Activated T-helper 1 cell treated with anti-CD3 and anti-CD28 coated beads, Interleukin-12 subunit alpha, Interleukin-12 subunit beta, Interleukin-2, Interleukin-4 antibody, amounts not matched to agents 30 ng/mL and 10 ng/mL and 1 ng/mL, durations not matched to agents 14 hours and 24 hours and 36 hours (primary cell): ENCODE measurements at regions of chr14 and their contacts with region 1.

Region 1: DNA sequence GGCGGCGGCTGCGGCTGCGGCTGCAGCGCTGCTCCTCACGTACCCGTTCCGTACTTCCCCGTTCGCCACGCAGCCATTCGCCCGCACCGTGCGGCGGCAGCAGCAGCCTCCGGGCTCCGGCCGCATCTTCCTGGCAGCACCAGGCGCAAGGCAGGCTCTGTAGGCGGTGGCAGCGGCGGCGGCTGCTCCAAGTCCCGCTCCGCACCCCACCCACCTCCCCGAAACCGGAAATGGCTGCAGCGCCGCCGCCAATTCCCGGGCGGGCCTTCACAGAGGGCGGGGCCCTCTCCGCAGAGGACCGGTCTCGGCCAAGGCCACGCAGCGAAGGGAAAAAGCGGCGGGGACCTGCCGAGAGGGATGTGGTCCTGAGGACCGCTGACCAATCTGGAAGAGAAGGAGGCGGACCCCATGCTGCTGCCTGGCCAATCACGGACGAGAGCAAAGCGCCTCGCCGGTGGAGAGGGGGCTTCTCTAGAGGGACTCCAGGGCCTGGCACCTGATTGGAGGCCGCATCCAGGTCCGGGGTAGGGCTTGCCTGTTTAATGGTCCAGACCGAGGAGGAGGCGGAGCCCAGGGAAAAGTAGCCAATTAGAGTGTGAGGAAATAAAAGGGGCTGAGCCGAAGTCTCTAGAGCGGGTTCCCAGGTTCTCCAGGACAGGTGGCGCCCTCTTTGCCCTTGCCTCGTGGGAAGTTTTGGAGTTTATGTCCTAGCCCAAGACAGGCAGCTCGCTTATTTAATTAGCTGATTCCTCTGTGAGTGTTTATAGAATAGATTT is at the start of gene SPTLC2:
- DNase-seq: peak; percentile 95
- H3K4me3 Mint-ChIP-seq: peak within 1 kb of the TSS; percentile 95
- H3K27ac Mint-ChIP-seq: peak within 1 kb of the TSS; percentile 96
- H3K4me1 Mint-ChIP-seq: peaks cover 46% of the 10 kb centered on the region
- H3K27me3 Mint-ChIP-seq: peaks cover 2% of the 10 kb centered on the region
- total RNA-seq, gene SPTLC2: 29.9 and 31.9 TPM in 2 replicates

Region 2: GRCh38 chr14:77554207-77554606 is 62.4 kb before region 1 on chr14:
- intact Hi-C with region 1: loop called (anchors 5 kb)
- DNase-seq: no peak
- H3K4me3 Mint-ChIP-seq: peak overlapping the region; percentile 45
- H3K27ac Mint-ChIP-seq: peak overlapping the region; percentile 47
- H3K4me1 Mint-ChIP-seq: peaks cover 17% of the 10 kb centered on the region
- H3K27me3 Mint-ChIP-seq: no peaks in the 10 kb centered on the region

Region 3: GRCh38 chr14:77580964-77581505 is 35.6 kb before region 1 on chr14:
- intact Hi-C with region 1: loop called (anchors 2 kb)
- DNase-seq: no peak
- H3K4me3 Mint-ChIP-seq: peak overlapping the region; percentile 52
- H3K27ac Mint-ChIP-seq: no peak overlapping the region
- H3K4me1 Mint-ChIP-seq: peaks cover 24% of the 10 kb centered on the region
- H3K27me3 Mint-ChIP-seq: no peaks in the 10 kb centered on the region

Region 4: DNA sequence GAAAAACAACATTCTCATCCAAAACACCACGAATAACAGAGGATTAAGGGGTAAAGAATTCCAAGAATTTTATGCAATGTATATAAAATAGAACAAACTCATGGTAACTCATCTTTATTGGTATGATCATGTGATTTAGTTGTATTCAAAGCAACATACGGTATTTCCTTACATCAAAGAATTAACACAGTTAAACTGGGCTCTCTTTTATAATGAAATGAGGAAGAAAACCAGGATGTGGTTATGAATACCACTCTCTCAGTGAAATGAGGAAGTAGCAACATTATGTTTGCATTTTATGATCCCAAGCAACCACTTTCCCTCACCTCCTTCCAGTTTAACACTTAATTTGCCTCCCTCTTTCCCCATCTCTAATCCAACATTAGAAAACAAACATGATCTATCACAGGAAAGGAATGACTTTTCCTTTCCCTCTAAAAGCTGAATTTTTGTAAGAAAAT is 23.1 kb before region 1 on chr14:
- intact Hi-C with region 1: loop called (anchors 2 kb)
- DNase-seq: no peak
- H3K4me3 Mint-ChIP-seq: peak overlapping the region; percentile 66
- H3K27ac Mint-ChIP-seq: peak overlapping the region; percentile 85
- H3K4me1 Mint-ChIP-seq: peaks cover 57% of the 10 kb centered on the region
- H3K27me3 Mint-ChIP-seq: no peaks in the 10 kb centered on the region

Region 5: GRCh38 chr14:77641534-77642341 is 25.1 kb after region 1 on chr14:
- intact Hi-C with region 1: loop called (anchors 1 kb)
- DNase-seq: peak; percentile 46
- H3K4me3 Mint-ChIP-seq: peak overlapping the region; percentile 78
- H3K27ac Mint-ChIP-seq: peak overlapping the region; percentile 92
- H3K4me1 Mint-ChIP-seq: peaks cover 20% of the 10 kb centered on the region
- H3K27me3 Mint-ChIP-seq: no peaks in the 10 kb centered on the region

Region 6: DNA sequence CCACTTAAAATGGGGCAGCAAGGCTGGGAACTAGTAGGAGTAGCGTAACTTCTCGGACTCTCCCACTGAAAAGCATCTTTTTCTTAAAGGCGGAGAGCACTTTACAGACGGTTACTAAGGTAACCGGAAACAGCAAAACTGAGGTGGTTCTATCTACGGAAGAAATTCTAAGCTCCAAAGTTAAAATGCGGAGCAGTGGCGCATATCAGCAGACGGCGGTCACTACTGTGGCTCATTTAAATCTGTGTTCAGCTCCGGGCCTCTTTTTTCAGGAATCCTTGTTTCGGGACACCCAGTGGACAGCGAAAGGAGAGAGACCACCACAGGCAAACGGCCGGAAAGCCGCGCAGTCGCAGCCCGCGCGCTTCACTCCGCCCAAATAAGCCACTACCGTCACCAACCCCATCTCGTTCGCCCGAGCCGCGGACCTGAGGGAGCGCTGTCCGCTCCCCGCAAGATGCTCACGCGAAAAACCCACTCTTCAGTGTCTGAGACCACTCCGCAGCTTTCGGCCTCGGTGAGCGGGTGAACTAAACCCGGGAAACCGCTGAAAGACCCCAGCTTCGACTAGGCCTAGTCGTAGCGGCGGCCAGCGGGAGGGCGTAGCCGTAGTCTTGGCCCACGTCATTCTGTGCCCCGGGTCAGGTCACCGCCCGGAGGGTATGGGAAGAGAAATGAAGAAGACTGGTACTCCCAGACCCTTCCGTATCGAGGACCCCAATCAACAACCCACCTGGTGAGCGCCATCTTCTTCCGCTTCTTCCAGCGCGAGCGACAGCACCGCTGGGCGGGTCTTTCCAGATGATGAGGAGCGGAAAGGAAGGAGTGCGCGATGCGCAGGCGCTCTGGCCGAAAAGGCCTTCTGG is 144.0 kb after region 1 on chr14 and contains the start of gene SNW1:
- intact Hi-C with region 1: loop called (anchors 1 kb)
- DNase-seq: peak; percentile 91
- H3K4me3 Mint-ChIP-seq: peak within 1 kb of the TSS; percentile 96
- H3K27ac Mint-ChIP-seq: peak within 1 kb of the TSS; percentile 97
- H3K4me1 Mint-ChIP-seq: peaks cover 38% of the 10 kb centered on the region
- H3K27me3 Mint-ChIP-seq: peaks cover 6% of the 10 kb centered on the region
- total RNA-seq, gene SNW1: 112 and 118 TPM in 2 replicates

Region 7: DNA sequence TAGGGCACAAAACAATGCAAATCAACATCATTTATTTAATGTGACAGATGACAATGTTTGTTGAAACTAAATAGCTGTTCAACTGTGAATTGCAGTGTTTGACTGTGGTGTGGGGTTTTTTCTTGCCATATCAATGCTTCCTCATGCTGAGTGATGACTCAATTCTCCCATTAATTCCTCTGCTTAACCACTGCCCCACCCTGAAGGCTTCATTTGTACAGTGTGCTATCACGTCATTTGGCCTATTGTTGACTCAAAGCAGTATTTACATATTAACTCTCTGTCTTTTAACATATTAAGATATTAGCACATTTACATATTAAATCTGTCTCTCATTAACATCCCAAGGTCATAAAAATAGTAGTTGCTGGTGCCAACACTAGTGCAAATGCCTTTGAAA is 388.7 kb after region 1 on chr14:
- intact Hi-C with region 1: loop called (anchors 2 kb)
- DNase-seq: peak; percentile 40
- H3K4me3 Mint-ChIP-seq: no peak overlapping the region
- H3K27ac Mint-ChIP-seq: peak overlapping the region; percentile 49
- H3K4me1 Mint-ChIP-seq: peaks cover 28% of the 10 kb centered on the region
- H3K27me3 Mint-ChIP-seq: peaks cover 10% of the 10 kb centered on the region